ENCODE measurements at regions of chr11 and their contacts with region 1.

Region 1: GRCh38 chr11:7442588-7443215 is 42.6 kb upstream of the OLFML1 start:
- DNase-seq: peak; percentile 54 to 56
- ATAC-seq: peak; percentile 80 to 95
- H3K4me3 ChIP-seq: no peak overlapping the region
- H3K27ac ChIP-seq: no peak overlapping the region
- H3K4me1 ChIP-seq: no peaks in the 10 kb centered on the region
- CTCF ChIP-seq: peak; percentile 73
- EP300 ChIP-seq: no peak
- POLR2A ChIP-seq: no peak
- RAD21 ChIP-seq: peak; percentile 73 to 83

Region 2: DNA sequence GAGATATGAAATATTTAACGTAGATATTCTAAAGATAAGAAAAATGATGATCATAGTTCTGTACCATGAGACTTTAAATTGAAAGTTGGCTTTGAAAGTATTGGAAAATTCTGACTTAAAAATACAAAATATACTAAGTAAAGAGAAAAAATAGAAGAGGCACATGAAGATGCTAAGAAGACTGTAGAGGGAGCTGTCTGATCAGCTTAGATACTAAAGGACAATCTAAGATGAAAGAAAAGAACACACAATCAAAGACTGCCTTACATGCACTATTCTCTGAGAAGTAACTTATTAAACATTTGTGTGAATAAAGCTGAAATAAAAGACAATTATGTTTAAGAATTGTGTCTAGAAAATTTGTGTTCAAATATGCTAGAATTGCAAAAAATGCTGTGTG is 298.8 kb before region 1 on chr11:
- CTCF ChIA-PET with region 1: interaction called, 27 read pairs
- POLR2A ChIA-PET with region 1: no interaction called
- DNase-seq: peak in 1 of 2 experiments; percentile 31
- ATAC-seq: no peak
- H3K4me3 ChIP-seq: no peak overlapping the region
- H3K27ac ChIP-seq: no peak overlapping the region
- H3K4me1 ChIP-seq: no peaks in the 10 kb centered on the region
- CTCF ChIP-seq: peak; percentile 38
- EP300 ChIP-seq: no peak
- POLR2A ChIP-seq: no peak
- RAD21 ChIP-seq: peak; percentile 52 to 59; a peak in 4 of 5 replicates

Region 3: DNA sequence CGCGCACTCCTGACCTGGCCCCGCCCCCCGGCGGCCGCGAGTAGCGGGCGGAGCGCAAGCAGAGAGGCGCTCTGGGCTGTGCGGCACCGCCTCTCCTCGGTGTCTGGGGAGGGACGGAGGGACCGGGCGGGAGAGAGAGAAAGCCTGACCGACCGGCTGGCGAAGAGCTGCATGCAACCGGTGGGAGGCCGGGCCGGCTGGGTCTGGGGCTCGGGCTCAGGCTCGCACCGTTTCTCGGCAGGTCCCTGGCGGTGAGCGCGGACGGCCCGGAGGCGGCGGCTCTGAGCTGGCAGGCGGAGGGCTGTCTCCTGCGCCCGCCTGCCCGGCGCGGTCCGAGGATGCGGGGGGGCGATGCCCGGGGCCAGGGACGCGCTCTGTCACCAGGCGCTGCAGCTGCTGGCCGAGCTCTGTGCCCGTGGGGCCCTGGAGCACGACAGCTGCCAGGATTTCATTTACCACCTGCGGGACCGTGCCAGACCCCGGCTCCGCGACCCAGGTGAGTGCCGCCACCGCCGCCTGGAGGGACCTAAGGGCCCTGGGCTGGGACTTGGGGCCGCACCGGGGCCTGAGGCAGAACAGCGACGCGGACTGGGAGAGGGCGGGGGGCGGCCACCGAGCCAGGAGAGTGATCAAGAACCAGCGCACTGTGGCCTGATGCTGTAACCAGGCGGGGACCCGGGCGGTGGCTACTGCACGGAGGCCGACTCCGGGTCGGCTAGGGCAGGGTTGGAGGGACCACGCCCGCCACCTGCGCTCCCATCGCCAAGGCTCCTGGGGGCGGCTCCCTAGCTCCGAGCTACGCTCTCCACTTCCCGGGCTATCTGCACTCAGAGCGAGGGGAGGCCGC is 190.6 kb before region 1 on chr11 and contains the start of gene SYT9:
- CTCF ChIA-PET with region 1: no interaction called
- POLR2A ChIA-PET with region 1: no interaction called
- DNase-seq: peak; percentile 21 to 38
- ATAC-seq: peak; percentile 90 to 97
- H3K4me3 ChIP-seq: peak within 1 kb of the TSS; percentile 54
- H3K27ac ChIP-seq: peak within 1 kb of the TSS in 1 of 2 experiments; percentile 40; a peak in 4 of 6 replicates
- H3K4me1 ChIP-seq: no peaks in the 10 kb centered on the region
- CTCF ChIP-seq: no peak
- EP300 ChIP-seq: no peak
- POLR2A ChIP-seq: no peak
- RAD21 ChIP-seq: no peak
- polyA plus RNA-seq, gene SYT9: 0.10 and 0.16 TPM in 2 replicates

Region 4: DNA sequence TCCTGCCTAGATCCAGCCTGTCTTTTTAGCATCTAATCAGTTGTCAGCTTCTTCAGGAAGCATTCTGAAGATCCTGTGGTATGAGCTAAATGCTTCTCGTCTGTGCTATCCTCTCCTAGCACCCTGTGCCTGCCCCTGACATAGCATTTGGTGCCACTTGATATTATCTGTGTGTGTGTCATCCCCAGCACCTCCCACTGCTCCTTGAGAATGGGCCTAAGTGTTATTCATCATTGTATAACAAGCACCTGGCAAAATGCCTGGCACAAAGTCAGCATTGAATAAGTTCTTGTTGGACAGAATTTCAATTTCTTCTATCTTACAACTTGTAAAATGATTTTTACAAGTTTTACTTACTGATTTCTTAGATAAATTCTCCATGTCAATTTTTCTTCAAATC is 14.5 kb after region 1 on chr11:
- CTCF ChIA-PET with region 1: interaction called, 26 read pairs
- POLR2A ChIA-PET with region 1: no interaction called
- DNase-seq: no peak
- ATAC-seq: no peak
- H3K4me3 ChIP-seq: no peak overlapping the region
- H3K27ac ChIP-seq: no peak overlapping the region
- H3K4me1 ChIP-seq: no peaks in the 10 kb centered on the region
- CTCF ChIP-seq: no peak
- EP300 ChIP-seq: no peak
- POLR2A ChIP-seq: no peak
- RAD21 ChIP-seq: no peak

Measured in A549 (cell line).